HepG2 (cell line): ENCODE measurements at regions of chr17 and their contacts with region 1.

Region 1: GRCh38 chr17:65294179-65294720 is 157.1 kb downstream of the RGS9 start:
- DNase-seq: peak; percentile 68
- ATAC-seq: peak; percentile 99
- H3K4me3 ChIP-seq: no peak overlapping the region; a peak in 1 of 6 replicates
- H3K27ac ChIP-seq: no peak overlapping the region
- H3K4me1 ChIP-seq: peaks cover 9% of the 10 kb centered on the region; the same call in 1 of the 2 replicates
- H3K27me3 ChIP-seq: peaks cover 0 to 18% of the 10 kb centered on the region in 2 experiments; a peak in 3 of 5 replicates
- CTCF ChIP-seq: peak; percentile 99
- EP300 ChIP-seq: no peak
- POLR2A ChIP-seq: no peak
- RAD21 ChIP-seq: peak; percentile 88

Region 2: DNA sequence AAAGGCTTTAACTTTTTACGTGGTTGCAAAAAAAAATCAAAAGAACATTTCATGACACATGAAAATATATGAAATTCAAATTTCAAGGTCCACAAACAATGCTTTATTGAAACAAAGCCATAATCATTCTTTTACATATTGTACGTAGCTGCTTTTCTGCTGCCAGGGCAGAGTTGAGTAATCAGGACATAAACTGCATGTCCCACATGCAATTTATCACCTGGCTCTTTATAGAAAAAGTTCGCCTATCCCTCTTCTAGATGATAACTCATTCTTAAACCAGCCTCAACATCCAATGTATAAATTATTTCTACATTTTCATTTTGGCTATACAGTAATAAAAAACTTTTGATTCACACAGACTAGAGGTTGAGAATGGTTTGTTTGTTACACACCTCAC is 112.3 kb after region 1 on chr17:
- CTCF ChIA-PET with region 1: no interaction called
- POLR2A ChIA-PET with region 1: no interaction called
- in situ Hi-C with region 1: no loop called
- intact Hi-C with region 1: loop called (anchors 1 kb)
- DNase-seq: no peak
- ATAC-seq: no peak
- H3K4me3 ChIP-seq: no peak overlapping the region
- H3K27ac ChIP-seq: no peak overlapping the region
- H3K4me1 ChIP-seq: no peaks in the 10 kb centered on the region
- H3K27me3 ChIP-seq: peaks cover 0 to 5% of the 10 kb centered on the region in 2 experiments; a peak in 1 of 5 replicates
- CTCF ChIP-seq: no peak
- EP300 ChIP-seq: no peak
- POLR2A ChIP-seq: no peak
- RAD21 ChIP-seq: no peak

Region 3: GRCh38 chr17:65547253-65547670 is 253.0 kb after region 1 on chr17:
- CTCF ChIA-PET with region 1: no interaction called
- POLR2A ChIA-PET with region 1: no interaction called
- in situ Hi-C with region 1: loop called (anchors 5 kb)
- intact Hi-C with region 1: no loop called
- DNase-seq: peak; percentile 75
- ATAC-seq: peak; percentile 68
- H3K4me3 ChIP-seq: peak overlapping the region in 1 of 3 experiments; percentile 5; a peak in 2 of 6 replicates
- H3K27ac ChIP-seq: peak overlapping the region; percentile 53
- H3K4me1 ChIP-seq: peaks cover 33% of the 10 kb centered on the region
- H3K27me3 ChIP-seq: no peaks in the 10 kb centered on the region
- CTCF ChIP-seq: no peak
- EP300 ChIP-seq: peak in 1 of 2 experiments; percentile 58; a peak in 1 of 4 replicates
- POLR2A ChIP-seq: no peak
- RAD21 ChIP-seq: no peak

Region 4: DNA sequence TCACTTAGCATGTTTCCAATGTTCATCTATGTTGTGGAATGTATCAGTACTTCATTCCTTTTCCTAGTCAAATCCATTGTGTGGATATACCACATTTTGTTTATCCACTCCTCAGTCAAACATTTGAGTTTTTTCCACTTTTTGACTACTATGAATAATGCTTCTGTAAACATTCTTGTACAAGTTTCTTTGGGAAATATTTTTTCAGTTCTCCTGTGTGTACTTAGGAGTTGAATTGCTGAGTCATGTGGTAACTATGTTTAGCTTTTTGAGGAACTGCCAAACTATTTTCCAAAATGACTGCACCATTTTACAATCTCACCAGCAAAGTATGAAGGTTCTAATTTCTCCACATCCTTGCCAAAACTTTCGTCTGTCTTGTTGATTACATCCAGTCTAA is 490.9 kb after region 1 on chr17:
- CTCF ChIA-PET with region 1: no interaction called
- POLR2A ChIA-PET with region 1: no interaction called
- in situ Hi-C with region 1: no loop called
- intact Hi-C with region 1: loop called (anchors 2 kb)
- DNase-seq: peak; percentile 95
- ATAC-seq: peak; percentile 77
- H3K4me3 ChIP-seq: no peak overlapping the region; a peak in 1 of 6 replicates
- H3K27ac ChIP-seq: peak overlapping the region; percentile 48
- H3K4me1 ChIP-seq: peaks cover 43% of the 10 kb centered on the region
- H3K27me3 ChIP-seq: no peaks in the 10 kb centered on the region
- CTCF ChIP-seq: no peak
- EP300 ChIP-seq: peak in 1 of 2 experiments; percentile 94; a peak in 2 of 4 replicates
- POLR2A ChIP-seq: no peak
- RAD21 ChIP-seq: no peak

Region 5: GRCh38 chr17:65988081-65988850 is 694.0 kb after region 1 on chr17:
- CTCF ChIA-PET with region 1: interaction called, 25 read pairs
- POLR2A ChIA-PET with region 1: no interaction called
- in situ Hi-C with region 1: loop called (anchors 5 kb)
- intact Hi-C with region 1: loop called (anchors 1 kb)
- DNase-seq: peak; percentile 76
- ATAC-seq: peak; percentile 83
- H3K4me3 ChIP-seq: no peak overlapping the region
- H3K27ac ChIP-seq: no peak overlapping the region
- H3K4me1 ChIP-seq: no peaks in the 10 kb centered on the region
- H3K27me3 ChIP-seq: no peaks in the 10 kb centered on the region
- CTCF ChIP-seq: peak; percentile 87
- EP300 ChIP-seq: no peak
- POLR2A ChIP-seq: no peak
- RAD21 ChIP-seq: peak; percentile 81